Posterior vena cava (tissue), 2 donors: ENCODE measurements at regions of chr7 and their contacts with region 1.

Region 1: DNA sequence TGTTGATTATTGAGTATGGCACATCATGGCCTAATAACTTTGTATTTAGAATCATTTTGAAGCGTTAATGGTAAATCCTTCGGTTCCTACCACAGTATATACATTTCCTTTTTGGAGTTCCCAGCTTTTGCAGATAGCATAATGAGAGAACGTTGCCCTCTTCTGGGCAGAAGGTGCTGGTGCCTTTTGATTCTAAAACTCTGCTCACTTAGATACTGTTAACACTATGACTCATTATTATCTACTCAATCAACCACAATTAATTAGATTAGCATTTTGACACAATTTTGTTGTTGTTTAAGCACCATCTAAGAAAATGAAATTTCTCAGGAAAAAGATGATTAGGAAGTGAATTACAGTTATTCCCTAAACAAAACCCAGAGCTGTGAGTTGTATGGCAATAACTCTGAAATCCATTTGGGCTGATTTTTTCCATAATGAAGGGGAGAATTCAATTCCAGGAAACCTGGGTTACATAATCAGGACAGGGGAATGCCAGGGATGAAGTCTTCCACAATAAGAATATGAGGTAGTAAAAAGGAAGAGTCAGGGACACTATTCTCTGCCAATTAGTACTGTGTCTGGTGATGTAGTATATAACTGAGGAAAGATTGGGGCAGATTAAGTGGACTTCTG is 11.5 kb upstream of the DLD start:
- DNase-seq: no peak

Region 2: DNA sequence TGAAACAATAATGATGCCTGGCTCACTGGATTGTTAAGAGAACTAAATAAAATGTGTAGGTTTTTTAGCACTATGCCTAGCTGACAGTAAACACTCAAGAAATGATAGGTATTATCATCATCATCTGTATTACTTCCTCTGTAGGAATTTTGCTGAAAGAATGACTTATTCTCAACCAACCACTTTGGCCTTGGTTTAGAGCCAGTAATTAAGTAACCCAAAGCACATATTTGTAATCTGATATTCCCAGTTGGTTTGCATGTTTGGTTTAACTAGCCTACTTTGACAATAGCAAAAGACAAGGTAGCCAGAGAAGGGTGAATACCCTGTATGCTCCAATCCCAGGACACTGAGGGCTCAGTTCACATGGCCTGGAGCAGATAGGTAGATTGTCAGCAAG is 265.1 kb before region 1 on chr7:
- intact Hi-C with region 1: loop called in 1 of 2 experiments (anchors 10 kb)
- DNase-seq: no peak

Region 3: GRCh38 chr7:107743567-107744344 is 135.8 kb before region 1 on chr7 and contains the start of gene CBLL1:
- intact Hi-C with region 1: loop called in 1 of 2 experiments (anchors 10 kb)
- DNase-seq: peak; percentile 99
- total RNA-seq, gene CBLL1: 18.6 to 20.7 TPM

Region 4: DNA sequence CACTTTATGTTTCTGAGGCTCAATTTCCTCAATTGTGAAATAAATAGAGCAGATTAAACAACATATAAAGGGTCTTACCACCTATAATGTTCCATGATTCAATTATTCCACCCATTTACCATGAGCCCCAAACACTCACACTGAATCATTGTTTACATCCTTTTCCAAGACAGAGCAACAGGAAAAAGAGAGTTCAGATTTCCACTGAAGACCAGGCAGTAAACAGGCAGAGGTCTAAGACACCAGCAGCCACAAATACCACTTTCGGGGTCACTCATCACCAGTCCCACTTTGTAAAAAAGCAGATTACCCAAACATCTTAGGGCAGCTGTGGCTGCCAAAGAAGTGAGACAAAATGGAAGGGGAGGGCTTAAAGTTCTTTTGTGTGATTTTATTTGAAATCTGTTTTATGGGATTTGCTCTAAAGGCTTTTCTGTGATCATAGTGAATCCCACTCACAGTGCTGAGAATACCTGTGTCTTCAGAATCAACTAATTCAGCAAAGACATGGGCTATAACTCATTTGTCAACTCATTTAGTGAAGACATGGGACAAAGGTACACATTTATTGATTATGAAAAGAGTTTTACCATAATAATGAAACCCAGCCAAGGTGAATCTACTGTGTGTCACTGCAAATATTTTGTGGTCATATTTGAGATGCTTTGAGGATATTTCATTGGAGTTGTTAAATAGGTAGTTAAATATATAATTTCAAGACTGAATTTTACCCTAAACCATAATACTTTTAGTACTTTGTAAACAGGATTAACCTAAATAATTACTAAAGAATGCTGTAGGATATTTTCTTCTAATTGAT is 13.4 kb before region 1 on chr7:
- intact Hi-C with region 1: no loop called
- DNase-seq: no peak

Region 5: GRCh38 chr7:108146070-108146837 is 266.7 kb after region 1 on chr7:
- intact Hi-C with region 1: loop called in 1 of 2 experiments (anchors 10 kb)
- DNase-seq: no peak